ENCODE measurements at regions of chr2 and their contacts with region 1.

Region 1: DNA sequence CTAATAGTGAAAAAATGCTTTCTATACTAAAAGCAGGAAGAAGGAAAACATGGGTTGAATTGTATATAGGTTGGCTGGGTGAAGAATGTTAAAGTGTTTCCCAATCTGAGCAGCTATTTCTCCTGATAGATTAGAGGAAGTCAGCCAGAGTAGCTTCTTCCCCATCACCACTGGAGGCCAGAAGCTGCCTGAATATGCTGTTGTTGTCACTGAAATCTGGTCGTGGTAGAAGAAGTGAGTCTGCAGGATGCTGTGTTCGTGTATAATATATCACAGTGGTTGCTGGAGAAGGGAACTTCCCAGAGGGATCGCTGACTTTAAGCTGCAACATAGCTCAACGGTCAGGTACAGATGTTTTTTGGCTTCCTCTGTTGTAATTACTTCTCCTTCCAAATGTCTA is 247.5 kb upstream of the LRATD1 start:
- DNase-seq: no peak
- H3K4me3 ChIP-seq: no peak overlapping the region
- H3K27ac ChIP-seq: no peak overlapping the region
- H3K4me1 ChIP-seq: no peaks in the 10 kb centered on the region
- H3K27me3 ChIP-seq: no peaks in the 10 kb centered on the region
- CTCF ChIP-seq: no peak
- EP300 ChIP-seq: no peak
- POLR2A ChIP-seq: no peak

Region 2: DNA sequence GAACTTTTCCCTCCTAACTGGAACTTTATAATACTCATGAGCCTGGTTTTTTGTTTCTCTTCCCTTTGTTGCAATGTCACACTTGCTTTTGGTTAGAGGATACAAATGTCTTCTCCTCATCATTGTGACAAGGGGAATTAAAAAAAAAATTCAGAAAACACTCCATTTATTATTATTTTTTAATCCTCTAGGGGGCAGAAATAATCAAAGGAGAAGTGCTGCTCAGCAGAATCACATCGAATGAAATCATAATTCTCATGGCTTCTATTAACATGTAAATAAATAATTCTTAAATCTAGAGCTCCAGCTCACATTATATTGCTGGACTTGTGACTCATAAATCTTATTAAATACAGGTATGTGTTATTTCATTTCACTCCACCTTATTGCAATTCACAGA is 1394.5 kb before region 1 on chr2:
- in situ Hi-C with region 1: no loop called
- intact Hi-C with region 1: no loop called
- DNase-seq: no peak
- H3K4me3 ChIP-seq: no peak overlapping the region
- H3K27ac ChIP-seq: no peak overlapping the region
- H3K4me1 ChIP-seq: no peaks in the 10 kb centered on the region
- H3K27me3 ChIP-seq: no peaks in the 10 kb centered on the region
- CTCF ChIP-seq: peak in 2 of 5 experiments; percentile 8 to 10
- EP300 ChIP-seq: no peak
- POLR2A ChIP-seq: no peak

Region 3: GRCh38 chr2:14459786-14460325 is 74.8 kb after region 1 on chr2:
- in situ Hi-C with region 1: no loop called
- intact Hi-C with region 1: loop called (anchors 5 kb)
- DNase-seq: no peak
- H3K4me3 ChIP-seq: no peak overlapping the region
- H3K27ac ChIP-seq: no peak overlapping the region
- H3K4me1 ChIP-seq: no peaks in the 10 kb centered on the region
- H3K27me3 ChIP-seq: no peaks in the 10 kb centered on the region
- CTCF ChIP-seq: no peak
- EP300 ChIP-seq: no peak
- POLR2A ChIP-seq: no peak

Region 4: GRCh38 chr2:14684516-14684915 is 299.5 kb after region 1 on chr2:
- in situ Hi-C with region 1: no loop called
- intact Hi-C with region 1: no loop called
- DNase-seq: no peak
- H3K4me3 ChIP-seq: no peak overlapping the region
- H3K27ac ChIP-seq: no peak overlapping the region
- H3K4me1 ChIP-seq: no peaks in the 10 kb centered on the region
- H3K27me3 ChIP-seq: no peaks in the 10 kb centered on the region
- CTCF ChIP-seq: no peak
- EP300 ChIP-seq: no peak
- POLR2A ChIP-seq: no peak